Panc1 (cell line): ENCODE measurements at regions of chr9 and their contacts with region 1.

Region 1: DNA sequence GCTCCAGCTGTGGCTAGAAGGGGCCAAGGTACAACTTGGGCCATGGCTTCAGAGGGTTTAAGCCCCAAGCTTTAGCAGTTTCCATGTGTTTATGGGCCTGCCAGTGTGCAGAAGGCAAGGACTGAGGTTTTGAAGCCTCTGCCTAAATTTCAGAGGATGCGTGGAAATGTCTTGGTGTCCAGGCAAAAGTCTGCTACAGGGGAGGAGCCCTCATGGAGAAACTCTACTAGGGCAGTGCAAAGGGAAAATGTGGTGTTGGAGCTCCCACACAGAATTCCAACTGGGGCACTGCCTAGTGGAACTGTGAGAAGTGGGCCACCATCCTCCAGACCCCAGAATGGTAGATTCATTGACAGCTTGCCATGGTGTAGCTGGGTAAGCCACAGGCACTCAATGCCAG is 527.2 kb upstream of the RORB start:
- DNase-seq: no peak
- ATAC-seq: no peak
- H3K4me3 ChIP-seq: no peak overlapping the region
- H3K27ac ChIP-seq: no peak overlapping the region
- H3K4me1 ChIP-seq: no peaks in the 10 kb centered on the region
- H3K27me3 ChIP-seq: no peaks in the 10 kb centered on the region
- CTCF ChIP-seq: no peak

Region 2: DNA sequence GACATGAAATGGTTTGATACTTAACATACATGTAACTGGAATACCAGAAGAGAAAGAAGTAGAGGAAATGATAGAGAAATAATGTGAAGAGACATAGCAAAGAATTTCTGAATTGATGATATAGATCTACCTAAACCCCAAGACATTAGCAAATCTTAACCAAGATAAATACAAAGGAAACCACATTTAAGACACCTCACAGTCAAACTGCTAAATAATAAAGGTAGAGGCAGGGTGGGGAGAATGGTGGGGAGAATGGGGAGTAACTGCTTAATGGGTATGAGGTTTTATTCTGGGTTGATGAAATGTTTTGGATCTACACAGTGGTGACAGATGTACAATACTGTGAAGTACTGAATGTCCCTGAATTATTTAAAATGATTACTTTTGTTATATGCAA is 1040.6 kb after region 1 on chr9:
- CTCF ChIA-PET with region 1: interaction called, 11 read pairs
- POLR2A ChIA-PET with region 1: no interaction called
- in situ Hi-C with region 1: no loop called
- intact Hi-C with region 1: no loop called
- DNase-seq: no peak
- ATAC-seq: no peak
- H3K4me3 ChIP-seq: no peak overlapping the region
- H3K27ac ChIP-seq: no peak overlapping the region
- H3K4me1 ChIP-seq: no peaks in the 10 kb centered on the region
- H3K27me3 ChIP-seq: no peaks in the 10 kb centered on the region
- CTCF ChIP-seq: no peak